MCF 10A (cell line): ENCODE measurements at regions of chr7 and their contacts with region 1.

Region 1: DNA sequence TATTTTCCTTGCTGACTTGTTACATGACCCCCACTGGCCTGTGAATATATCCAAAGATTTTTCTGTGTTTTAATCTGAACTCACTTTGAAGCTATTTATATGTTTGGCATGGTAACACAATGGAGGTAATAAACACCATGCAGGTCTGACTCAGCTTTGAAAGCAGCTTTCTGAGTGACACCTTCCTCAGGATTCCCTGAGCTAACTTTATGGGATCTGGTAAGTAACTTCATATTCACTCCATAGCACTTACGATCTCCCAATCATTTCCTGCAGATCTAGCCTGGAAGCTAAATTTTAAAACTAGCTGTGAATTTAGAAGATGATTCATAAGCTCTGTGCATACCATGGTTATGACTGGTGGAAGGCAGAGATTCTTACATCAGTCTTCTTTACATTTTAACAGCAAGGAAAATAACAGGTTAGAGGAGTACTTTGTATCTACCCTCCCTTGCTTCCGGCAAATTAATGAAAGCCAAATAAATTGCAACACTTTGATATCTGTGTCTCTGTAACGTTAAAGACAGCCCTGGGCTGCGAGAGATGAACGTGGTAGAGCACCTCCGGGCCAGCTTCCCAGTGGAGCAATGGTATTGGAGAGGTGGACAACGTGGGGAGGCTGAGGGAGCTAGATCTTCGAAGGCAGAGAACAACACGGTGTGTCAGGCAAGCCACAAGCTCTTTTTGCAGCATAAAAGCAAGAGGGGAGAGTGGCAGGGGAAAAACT is 170.2 kb upstream of the KLF14 start:
- DNase-seq: peak; percentile 96
- H3K4me3 Mint-ChIP-seq: peak overlapping the region; percentile 59
- H3K27ac Mint-ChIP-seq: peak overlapping the region; percentile 97
- H3K4me1 Mint-ChIP-seq: peaks cover 66% of the 10 kb centered on the region
- H3K27me3 Mint-ChIP-seq: no peaks in the 10 kb centered on the region
- CTCF ChIP-seq: no peak

Region 2: DNA sequence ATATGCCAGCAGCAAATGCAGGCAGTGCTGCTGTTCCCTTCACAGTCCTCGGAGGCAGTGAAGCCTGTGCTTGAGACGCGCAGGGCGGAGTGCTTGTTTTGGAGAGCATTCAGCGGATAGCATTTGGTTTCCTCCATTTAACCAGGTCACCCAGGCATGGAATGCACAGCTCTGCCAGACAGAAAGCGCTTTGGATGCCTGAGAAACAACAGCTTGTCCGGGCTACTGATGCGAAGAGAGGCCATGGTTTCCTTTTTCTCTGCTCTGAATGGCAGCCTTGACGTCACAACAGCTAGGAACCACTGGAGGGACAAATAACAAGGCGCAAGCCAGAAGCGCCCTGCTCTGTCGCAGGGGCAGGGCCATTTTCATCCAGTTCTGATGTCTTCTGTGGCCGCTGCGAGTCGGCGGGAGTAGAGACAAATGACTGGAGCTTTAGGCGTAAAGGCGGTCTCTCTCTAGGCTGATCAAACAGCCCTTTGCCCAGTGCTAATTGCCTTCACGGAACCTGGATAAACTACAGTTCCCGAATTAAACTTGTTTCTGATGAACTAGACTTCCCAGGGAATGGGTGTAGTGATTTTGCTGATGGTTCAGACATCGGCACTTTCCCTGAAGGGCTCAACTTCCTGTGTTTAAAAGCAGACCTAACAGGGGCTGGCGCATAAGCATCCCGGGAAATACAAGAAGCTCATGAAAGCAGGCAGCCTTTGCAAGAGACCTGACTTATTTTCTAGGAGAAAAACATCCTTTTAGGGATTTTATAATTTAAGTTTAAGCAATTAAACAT is 17.4 kb after region 1 on chr7:
- CTCF ChIA-PET with region 1: interaction called, 3 read pairs
- POLR2A ChIA-PET with region 1: interaction called, 39 read pairs
- intact Hi-C with region 1: no loop called
- DNase-seq: no peak
- H3K4me3 Mint-ChIP-seq: no peak overlapping the region
- H3K27ac Mint-ChIP-seq: peak overlapping the region; percentile 42
- H3K4me1 Mint-ChIP-seq: peaks cover 53% of the 10 kb centered on the region
- H3K27me3 Mint-ChIP-seq: no peaks in the 10 kb centered on the region
- CTCF ChIP-seq: no peak

Region 3: DNA sequence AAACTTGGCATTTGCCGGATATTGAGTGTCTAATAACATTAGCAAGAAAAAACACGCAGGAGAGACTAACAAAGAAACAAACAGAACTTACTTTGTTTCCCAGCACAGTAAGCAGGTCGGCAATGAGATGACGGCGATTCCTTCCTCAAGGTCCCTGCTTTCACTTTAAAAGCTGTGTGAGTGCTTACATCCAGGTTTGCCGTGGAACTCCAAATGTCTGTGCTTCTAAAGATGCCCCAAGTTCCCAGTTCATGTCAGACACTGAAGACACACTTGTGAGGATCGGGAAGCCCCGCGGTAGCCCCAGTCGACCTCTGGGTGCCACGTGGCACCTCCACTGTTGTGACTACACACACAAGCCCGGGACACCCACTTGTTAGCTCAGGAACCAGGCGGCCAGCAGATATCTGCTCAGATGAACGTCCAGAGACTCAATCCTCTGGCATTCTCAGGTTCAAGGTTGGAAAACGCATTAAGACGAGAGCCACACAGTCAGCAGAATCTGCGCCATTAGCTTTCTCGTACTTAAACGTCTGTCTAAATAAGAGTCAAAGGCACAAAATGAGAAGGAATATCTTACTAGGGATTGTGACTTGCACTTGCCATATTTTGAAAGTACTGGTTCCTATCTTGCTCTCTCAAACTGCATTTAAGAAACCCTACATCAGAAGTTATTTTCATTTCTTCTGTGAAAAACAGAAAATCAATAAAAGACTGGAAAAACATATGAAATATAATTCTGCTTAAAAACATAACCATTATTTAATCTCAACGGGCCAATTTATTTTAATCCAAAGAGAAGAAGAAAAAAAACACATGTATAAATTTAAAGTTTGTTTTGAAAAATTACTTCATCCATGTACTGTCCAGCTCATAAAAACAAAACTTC is 37.4 kb after region 1 on chr7:
- CTCF ChIA-PET with region 1: interaction called, 123 read pairs
- POLR2A ChIA-PET with region 1: interaction called, 106 read pairs
- intact Hi-C with region 1: no loop called
- DNase-seq: peak; percentile 41
- H3K4me3 Mint-ChIP-seq: peak overlapping the region; percentile 76
- H3K27ac Mint-ChIP-seq: peak overlapping the region; percentile 90
- H3K4me1 Mint-ChIP-seq: peaks cover 70% of the 10 kb centered on the region
- H3K27me3 Mint-ChIP-seq: no peaks in the 10 kb centered on the region
- CTCF ChIP-seq: no peak

Region 4: DNA sequence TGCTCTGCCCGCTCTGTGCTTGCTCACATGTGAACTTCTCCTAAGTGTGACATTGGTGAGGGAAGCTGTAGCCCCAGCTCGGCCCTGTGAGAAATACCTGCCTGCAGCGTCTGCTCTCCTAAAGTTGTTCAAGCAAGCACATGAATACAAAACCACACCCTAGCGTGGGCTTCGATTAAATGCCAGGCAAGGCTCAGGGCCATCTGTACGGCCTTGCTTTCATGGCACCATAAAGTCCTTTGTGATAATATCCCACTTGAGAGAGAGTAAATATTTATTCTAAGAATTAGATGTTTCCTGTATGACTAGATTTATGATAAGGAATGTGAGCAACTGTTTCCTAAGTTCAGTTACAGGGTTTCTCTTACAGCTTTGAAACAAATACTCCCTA is 92.6 kb after region 1 on chr7:
- CTCF ChIA-PET with region 1: interaction called, 8 read pairs
- POLR2A ChIA-PET with region 1: interaction called, 65 read pairs
- intact Hi-C with region 1: no loop called
- DNase-seq: peak; percentile 73
- H3K4me3 Mint-ChIP-seq: peak overlapping the region; percentile 21
- H3K27ac Mint-ChIP-seq: peak overlapping the region; percentile 96
- H3K4me1 Mint-ChIP-seq: peaks cover 54% of the 10 kb centered on the region
- H3K27me3 Mint-ChIP-seq: no peaks in the 10 kb centered on the region
- CTCF ChIP-seq: no peak

Region 5: GRCh38 chr7:131027287-131027773 is 123.1 kb after region 1 on chr7:
- CTCF ChIA-PET with region 1: no interaction called
- POLR2A ChIA-PET with region 1: interaction called, 15 read pairs
- intact Hi-C with region 1: no loop called
- DNase-seq: peak; percentile 89
- H3K4me3 Mint-ChIP-seq: peak overlapping the region; percentile 64
- H3K27ac Mint-ChIP-seq: peak overlapping the region; percentile 88
- H3K4me1 Mint-ChIP-seq: peaks cover 31% of the 10 kb centered on the region
- H3K27me3 Mint-ChIP-seq: no peaks in the 10 kb centered on the region
- CTCF ChIP-seq: no peak

Region 6: GRCh38 chr7:131459256-131459655 is 555.1 kb after region 1 on chr7:
- CTCF ChIA-PET with region 1: no interaction called
- POLR2A ChIA-PET with region 1: no interaction called
- intact Hi-C with region 1: no loop called
- DNase-seq: no peak
- H3K4me3 Mint-ChIP-seq: no peak overlapping the region
- H3K27ac Mint-ChIP-seq: no peak overlapping the region
- H3K4me1 Mint-ChIP-seq: peaks cover 13% of the 10 kb centered on the region
- H3K27me3 Mint-ChIP-seq: no peaks in the 10 kb centered on the region
- CTCF ChIP-seq: no peak